ENCODE measurements at regions of chr1 and their contacts with region 1.

Region 1: GRCh38 chr1:12078938-12079861 is 16.1 kb downstream of the TNFRSF8 start:
- DNase-seq: peak; percentile 80
- CTCF ChIP-seq: peak; percentile 59

Region 2: DNA sequence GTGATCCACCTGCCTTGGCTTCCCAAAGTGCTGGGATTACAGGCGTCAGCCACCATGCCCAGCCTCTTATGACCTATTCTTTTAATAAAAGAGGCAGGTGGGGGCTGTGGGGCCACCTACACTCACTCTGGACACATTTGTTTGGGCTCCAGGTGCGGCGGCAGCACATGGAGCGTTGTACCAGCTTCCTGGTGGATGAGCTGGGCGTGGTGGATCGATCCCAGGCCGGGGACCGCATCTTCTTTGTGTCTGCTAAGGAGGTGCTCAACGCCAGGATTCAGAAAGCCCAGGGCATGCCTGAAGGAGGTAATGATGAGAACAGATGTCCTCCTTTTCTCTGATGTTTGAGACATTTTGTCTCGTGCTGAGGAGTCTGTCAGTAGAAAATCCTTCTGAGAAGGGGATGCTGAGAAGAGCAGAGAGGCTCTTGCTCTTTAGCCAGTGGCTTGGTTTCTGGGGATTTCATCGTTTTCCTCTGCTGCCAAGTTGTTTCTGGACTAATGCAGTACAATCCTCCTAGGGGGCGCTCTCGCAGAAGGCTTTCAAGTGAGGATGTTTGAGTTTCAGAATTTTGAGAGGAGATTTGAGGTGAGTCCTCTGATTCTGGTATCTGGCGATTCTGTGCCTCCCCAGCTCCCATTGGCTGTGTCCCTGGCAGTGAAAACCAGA is 77.8 kb before region 1 on chr1:
- CTCF ChIA-PET with region 1: interaction called, 12 read pairs
- POLR2A ChIA-PET with region 1: no interaction called
- DNase-seq: no peak
- CTCF ChIP-seq: peak; percentile 69

Region 3: GRCh38 chr1:12031039-12031980 is 47.9 kb before region 1 on chr1:
- CTCF ChIA-PET with region 1: interaction called, 35 read pairs
- POLR2A ChIA-PET with region 1: no interaction called
- DNase-seq: peak; percentile 71
- CTCF ChIP-seq: peak; percentile 66

Region 4: GRCh38 chr1:12052008-12052573 is 27.1 kb before region 1 on chr1:
- CTCF ChIA-PET with region 1: interaction called, 45 read pairs
- POLR2A ChIA-PET with region 1: interaction called, 12 read pairs
- DNase-seq: peak; percentile 86
- CTCF ChIP-seq: no peak

Region 5: DNA sequence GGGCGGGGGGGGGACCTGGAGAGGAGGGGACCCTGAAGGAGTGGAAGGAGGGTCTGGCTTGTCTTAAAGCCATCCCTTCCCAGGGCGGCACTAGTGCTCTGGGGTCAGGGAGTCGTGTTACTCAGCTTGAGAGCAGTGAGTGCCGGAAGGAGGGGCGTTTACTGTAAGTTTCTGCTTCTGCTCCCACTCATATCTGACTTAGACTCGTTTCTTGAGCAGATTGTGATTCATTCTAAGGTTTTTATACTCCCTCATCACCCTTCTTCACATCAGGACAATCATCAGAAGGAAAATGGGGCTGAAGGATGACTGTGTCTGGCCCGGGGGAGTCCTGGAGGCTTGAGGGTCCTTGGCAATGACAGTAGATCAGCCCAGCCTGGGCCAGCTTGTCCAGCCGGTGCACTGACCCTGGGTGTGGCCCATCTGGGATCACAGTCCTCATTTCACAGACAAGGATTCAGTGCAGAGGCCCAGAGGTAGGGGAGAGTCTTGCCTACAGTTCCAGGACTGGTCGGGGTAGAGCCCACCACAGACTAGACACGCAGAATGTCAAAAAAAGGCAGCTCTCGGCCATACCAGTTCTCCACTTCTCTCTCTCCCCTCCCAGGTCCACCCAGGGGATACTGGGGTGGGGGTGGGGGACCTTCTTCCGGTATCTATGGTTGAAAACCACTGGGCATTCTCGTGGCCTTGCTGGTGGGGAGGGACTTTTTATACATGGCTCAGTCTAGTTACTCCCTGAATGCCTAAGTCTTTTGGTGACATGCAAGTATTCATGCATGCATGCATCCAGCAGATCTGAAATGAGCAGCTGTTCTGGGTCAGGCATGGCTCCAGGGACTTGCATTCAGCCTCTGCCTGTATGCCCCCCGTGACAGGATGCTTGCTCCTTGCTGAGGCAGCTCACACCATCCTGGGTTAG is 11.0 kb before region 1 on chr1:
- CTCF ChIA-PET with region 1: interaction called, 81 read pairs
- POLR2A ChIA-PET with region 1: interaction called, 8 read pairs
- DNase-seq: peak; percentile 68
- CTCF ChIP-seq: no peak

Region 6: GRCh38 chr1:12135612-12136011 is 56.4 kb after region 1 on chr1:
- CTCF ChIA-PET with region 1: no interaction called
- POLR2A ChIA-PET with region 1: no interaction called
- DNase-seq: no peak
- CTCF ChIP-seq: no peak

Region 7: GRCh38 chr1:12185918-12186678 is 106.9 kb after region 1 on chr1:
- CTCF ChIA-PET with region 1: no interaction called
- POLR2A ChIA-PET with region 1: no interaction called
- DNase-seq: no peak
- CTCF ChIP-seq: no peak

Measured in GM10248 (cell line).